Stomach (tissue), 19 donors: ENCODE measurements at regions of chr1 and their contacts with region 1.

Region 1: DNA sequence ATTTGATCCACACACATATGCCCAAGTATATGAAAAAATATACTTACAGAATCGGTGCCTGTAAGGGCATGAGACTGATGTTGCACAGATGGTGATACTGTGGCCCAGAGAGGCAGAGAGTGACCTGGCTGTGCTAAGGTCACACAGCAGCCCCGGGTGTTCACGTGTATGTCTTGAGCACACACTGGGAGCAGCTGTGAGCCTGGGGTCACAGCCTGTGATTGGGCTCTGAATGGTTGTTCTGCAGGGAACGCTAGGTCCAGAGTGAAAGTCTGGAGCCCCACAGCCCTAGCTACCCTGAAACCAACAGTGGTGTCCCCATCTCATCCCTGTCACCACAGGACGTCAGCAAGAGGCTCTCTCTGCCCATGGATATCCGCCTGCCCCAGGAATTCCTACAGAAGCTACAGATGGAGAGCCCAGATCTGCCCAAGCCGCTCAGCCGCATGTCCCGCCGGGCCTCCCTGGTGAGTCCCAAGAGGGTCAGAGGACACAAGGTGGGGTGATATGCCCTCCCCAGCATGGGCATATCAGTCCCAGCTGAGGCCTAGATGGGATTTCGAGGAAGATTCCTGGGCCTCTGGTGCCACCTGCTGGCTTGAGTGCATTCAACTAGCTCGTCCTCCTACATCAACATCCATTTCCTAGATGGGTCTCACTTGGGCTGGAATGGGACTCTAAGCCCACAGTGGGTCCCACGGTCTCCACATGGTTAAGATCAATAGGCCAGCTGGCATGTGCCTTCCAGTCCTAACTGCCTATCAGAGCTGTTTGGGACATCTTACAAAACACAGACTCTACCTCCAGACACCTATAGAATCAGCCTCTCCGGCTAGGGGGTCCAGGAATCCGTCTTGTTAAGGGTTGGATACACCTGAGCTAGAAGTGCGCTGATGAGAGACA is 19.7 kb downstream of the CDK18 start:
- DNase-seq: peak; percentile 80 to 91
- H3K4me3 ChIP-seq: no peak overlapping the region
- H3K27ac ChIP-seq: no peak overlapping the region
- H3K4me1 ChIP-seq: peaks cover 7 to 18% (median 13%) of the 10 kb centered on the region in 4 donors
- H3K27me3 ChIP-seq: peaks cover 0 to 7% (median 0%) of the 10 kb centered on the region in 3 donors
- CTCF ChIP-seq: peak in 5 of 7 experiments; percentile 38 to 87 (median 75)
- EP300 ChIP-seq: no peak
- POLR2A ChIP-seq: no peak

Region 2: DNA sequence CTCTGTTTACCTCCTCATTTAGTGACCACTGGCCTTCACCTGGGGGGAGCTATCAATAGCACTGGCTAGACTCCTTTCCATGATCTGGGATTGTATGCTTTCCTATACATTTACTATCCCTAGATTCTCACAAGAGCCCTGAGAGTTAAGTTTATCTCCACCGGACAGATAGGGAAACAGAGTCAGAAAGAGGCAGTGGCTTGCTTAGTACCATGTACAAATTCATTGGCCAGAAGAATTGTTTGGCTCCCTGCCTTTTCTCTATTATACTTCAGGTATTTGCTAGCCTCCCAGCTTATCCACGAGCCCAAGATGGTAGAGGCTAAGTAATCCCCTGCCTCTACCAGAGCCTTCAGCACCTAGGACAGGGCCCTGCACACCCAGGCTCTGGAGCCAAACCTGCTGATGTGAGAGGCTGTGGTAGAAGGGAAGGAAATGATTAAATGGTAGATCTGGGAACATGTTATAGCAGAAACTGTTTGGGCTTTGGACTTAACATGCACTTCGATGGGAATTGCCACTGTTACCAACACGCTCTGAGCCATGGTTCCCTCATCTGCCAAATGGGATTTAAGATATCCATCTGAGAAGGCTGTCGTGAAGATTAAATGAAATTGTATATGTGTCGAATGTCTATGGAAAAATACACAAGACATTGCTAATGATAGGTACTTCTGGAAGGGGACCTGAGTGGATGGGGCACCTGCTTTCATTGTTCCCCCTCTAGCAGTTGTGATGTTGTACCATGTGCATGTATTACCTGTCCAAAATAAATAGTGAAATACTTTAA is 65.2 kb before region 1 on chr1:
- intact Hi-C with region 1: no loop called
- DNase-seq: peak in 1 of 2 donors; percentile 89
- H3K4me3 ChIP-seq: no peak overlapping the region
- H3K27ac ChIP-seq: no peak overlapping the region
- H3K4me1 ChIP-seq: peaks cover 17 to 28% (median 22%) of the 10 kb centered on the region in 4 donors
- H3K27me3 ChIP-seq: peaks cover 21 to 71% (median 60%) of the 10 kb centered on the region in 3 donors
- CTCF ChIP-seq: no peak
- EP300 ChIP-seq: no peak
- POLR2A ChIP-seq: no peak

Region 3: DNA sequence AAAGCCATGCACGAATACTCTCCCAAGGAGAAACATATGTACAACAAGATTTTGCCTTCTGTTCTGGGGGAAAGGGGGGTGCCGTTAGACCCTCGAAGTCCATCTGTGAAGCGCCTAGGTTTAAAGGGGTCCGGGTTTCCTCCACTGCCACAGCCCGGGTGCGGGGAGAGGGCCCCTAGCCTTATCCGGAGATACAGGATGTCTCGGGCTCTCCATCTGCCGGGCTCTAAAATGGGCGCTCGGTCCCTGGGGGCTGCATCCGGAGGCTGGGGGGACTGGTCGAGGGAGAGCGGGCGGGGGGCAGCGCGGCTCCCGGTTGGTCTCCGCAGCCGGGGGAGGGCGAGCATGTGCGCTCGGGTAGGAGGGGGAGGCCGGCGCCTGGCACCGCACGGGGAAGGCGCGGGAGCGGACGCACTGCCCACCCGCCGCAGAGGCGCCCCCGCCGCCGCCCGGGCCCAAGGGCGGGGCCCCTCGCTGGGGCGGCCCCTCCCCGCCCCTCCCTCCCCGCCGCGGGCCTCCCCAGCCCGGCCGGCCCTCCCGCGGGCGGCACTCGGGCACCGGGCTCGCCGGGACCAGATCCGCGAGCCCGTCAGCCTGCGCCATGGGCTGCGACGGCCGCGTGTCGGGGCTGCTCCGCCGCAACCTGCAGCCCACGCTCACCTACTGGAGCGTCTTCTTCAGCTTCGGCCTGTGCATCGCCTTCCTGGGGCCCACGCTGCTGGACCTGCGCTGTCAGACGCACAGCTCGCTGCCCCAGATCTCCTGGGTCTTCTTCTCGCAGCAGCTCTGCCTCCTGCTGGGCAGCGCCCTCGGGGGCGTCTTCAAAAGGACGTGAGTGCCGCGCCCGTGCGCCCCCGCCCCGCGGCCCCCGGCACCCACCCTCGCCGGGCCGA is 44.6 kb after region 1 on chr1:
- intact Hi-C with region 1: no loop called
- DNase-seq: peak; percentile 45 to 71
- H3K4me3 ChIP-seq: peak overlapping the region; percentile 45 to 56 (median 50)
- H3K27ac ChIP-seq: peak overlapping the region; percentile 70 to 85 (median 76)
- H3K4me1 ChIP-seq: peaks cover 22 to 60% (median 34%) of the 10 kb centered on the region in 4 donors
- H3K27me3 ChIP-seq: peaks cover 0 to 67% (median 24%) of the 10 kb centered on the region in 3 donors
- CTCF ChIP-seq: no peak
- EP300 ChIP-seq: no peak
- POLR2A ChIP-seq: no peak

Region 4: DNA sequence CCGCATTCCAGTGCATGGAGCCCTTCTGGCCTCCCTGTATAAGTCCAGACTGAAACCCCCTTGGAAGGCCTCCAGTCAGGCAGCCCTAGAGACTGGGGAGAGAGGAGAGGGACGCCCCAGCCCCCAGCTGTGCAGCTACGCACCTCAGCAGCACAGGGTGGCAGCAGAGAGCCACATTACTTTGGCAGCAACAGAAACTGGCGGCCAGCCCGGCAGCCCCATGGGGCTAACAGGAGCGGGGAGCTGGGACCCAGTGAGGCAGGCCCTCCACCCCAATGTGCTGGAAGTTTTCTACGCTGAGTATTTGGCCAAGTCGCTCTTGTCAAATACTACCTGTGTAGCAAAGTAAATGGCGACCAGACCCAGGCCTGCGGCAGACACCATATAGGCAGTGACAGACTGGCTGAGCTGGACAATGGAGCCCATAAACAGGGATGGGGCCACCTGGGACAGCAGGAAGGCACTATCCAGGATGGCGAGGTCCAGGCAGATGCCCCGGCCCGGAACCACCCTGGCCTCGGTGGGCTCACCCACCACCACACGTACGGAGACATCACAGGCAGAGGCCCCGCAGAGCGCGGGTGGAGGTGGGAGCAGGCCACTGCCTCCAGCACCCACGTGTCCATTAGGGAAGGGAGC is 134.9 kb after region 1 on chr1:
- intact Hi-C with region 1: loop called (anchors 2 kb)
- DNase-seq: peak; percentile 87 to 92
- H3K4me3 ChIP-seq: no peak overlapping the region
- H3K27ac ChIP-seq: no peak overlapping the region
- H3K4me1 ChIP-seq: peaks cover 6 to 53% (median 18%) of the 10 kb centered on the region in 4 donors
- H3K27me3 ChIP-seq: no peaks in the 10 kb centered on the region
- CTCF ChIP-seq: peak in 5 of 7 experiments; percentile 69 to 88 (median 85)
- EP300 ChIP-seq: no peak
- POLR2A ChIP-seq: no peak